ENCODE measurements at regions of chr9 and their contacts with region 1.

Region 1: DNA sequence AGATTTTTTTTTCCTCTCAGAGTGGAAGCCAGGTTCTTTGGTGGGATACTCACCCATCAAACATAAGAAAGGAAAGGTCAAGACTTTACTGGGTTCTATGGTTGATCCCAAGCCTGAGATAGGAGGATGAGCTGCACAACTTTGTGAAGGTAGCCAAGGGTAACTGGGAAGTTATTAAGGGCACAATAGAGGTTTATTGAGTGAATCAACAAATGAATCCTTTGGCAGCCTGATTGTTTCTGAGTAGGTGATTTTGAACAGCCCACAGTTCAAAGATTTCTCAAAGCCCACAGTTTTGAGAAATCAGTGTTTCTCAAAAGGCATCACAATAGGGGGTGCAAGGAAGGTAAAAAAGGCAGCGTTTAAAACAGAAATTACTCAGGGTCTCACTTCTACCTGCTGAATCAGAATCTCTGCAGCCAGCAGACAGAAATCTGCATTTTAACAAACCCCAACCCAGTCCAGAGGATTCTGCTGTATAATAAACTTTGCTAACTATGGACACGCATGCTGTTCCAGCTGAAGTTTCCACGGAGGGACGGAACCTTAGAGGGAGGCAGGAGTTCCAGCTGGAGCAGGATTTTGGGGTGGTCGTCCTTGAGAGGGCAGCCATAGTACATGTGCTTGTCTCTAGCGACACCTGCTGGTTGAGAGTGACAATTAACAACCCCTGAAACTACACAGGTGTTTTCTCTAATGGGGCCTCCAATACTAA is 32.7 kb upstream of the FSD1L start:
- DNase-seq: peak in 1 of 2 donors; percentile 45
- ATAC-seq: peak; percentile 59 to 80 (median 71)
- H3K4me3 ChIP-seq: no peak overlapping the region
- H3K27ac ChIP-seq: no peak overlapping the region
- H3K4me1 ChIP-seq: peaks cover 0 to 11% (median 0%) of the 10 kb centered on the region in 9 donors
- H3K27me3 ChIP-seq: no peaks in the 10 kb centered on the region
- CTCF ChIP-seq: peak; percentile 70 to 92 (median 88)

Region 2: GRCh38 chr9:104808035-104808614 is 607.0 kb before region 1 on chr9:
- intact Hi-C with region 1: loop called in 2 of 10 experiments (anchors 10 kb)
- DNase-seq: peak in 1 of 2 donors; percentile 30
- ATAC-seq: peak in 6 of 8 donors; percentile 54 to 74 (median 66)
- H3K4me3 ChIP-seq: no peak overlapping the region
- H3K27ac ChIP-seq: no peak overlapping the region
- H3K4me1 ChIP-seq: peaks cover 0 to 13% (median 0%) of the 10 kb centered on the region in 9 donors
- H3K27me3 ChIP-seq: no peaks in the 10 kb centered on the region
- CTCF ChIP-seq: peak in 7 of 9 donors; percentile 29 to 58 (median 48)

Region 3: GRCh38 chr9:104863180-104863883 is 551.8 kb before region 1 on chr9:
- intact Hi-C with region 1: loop called (anchors 1 to 10 kb)
- DNase-seq: peak in 1 of 2 donors; percentile 50
- ATAC-seq: peak; percentile 63 to 75 (median 73)
- H3K4me3 ChIP-seq: no peak overlapping the region
- H3K27ac ChIP-seq: peak overlapping the region in 4 of 10 donors; percentile 10 to 66 (median 34)
- H3K4me1 ChIP-seq: peaks cover 6 to 82% (median 35%) of the 10 kb centered on the region in 9 donors
- H3K27me3 ChIP-seq: no peaks in the 10 kb centered on the region
- CTCF ChIP-seq: peak; percentile 38 to 89 (median 77)

Region 4: DNA sequence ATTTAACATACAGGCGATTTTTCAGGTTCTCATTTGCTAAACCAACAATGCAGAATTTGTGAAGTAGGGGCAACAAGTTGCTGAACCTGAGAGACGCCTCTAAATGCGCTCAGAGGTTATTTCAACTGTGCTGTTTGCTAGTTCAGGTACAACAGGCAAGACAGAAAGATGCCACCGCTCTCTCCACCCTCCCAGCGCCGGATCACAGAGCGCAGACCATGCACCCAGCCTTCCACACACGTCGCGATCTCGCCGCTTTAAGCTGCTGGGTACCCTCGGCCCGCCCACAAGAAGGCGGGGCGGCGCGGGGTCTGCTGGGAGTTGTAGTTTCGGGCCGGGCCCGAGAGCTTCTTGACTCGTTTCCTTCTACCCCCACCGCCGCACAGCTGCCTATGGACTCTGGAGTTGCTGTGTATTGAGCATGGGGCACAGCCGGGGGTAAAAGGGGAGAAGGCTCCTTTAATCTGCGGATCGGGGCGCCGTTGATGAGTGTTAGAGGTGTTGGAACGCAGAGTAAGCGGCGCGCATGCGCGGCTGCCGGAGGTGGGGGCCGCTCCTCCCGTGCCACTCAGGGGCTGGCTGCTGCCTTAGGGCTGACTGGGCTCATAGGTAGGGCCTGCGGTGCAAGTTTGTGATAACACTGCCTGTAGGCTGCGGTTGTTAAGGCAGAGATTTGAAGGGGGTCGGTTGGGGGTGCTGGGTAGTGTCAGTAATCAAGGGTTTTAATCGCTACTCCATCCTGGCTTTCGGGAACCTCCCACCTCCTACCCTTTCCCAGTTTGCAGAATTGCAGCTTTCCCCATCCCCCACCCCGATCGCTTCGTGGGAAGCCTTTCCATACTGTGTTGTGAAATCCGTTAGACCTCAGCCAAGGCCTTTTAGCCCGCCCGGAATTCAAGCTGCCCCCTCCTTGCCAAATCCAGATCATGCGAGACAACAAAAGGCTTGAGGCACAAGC is 446.8 kb before region 1 on chr9:
- intact Hi-C with region 1: loop called in 1 of 10 experiments (anchors 10 kb)
- DNase-seq: peak; percentile 89 to 90
- ATAC-seq: peak; percentile 95 to 98 (median 97)
- H3K4me3 ChIP-seq: peak overlapping the region; percentile 65 to 93 (median 75)
- H3K27ac ChIP-seq: peak overlapping the region; percentile 84 to 98 (median 92)
- H3K4me1 ChIP-seq: peaks cover 0 to 25% (median 9%) of the 10 kb centered on the region in 9 donors
- H3K27me3 ChIP-seq: no peaks in the 10 kb centered on the region
- CTCF ChIP-seq: no peak

Region 5: DNA sequence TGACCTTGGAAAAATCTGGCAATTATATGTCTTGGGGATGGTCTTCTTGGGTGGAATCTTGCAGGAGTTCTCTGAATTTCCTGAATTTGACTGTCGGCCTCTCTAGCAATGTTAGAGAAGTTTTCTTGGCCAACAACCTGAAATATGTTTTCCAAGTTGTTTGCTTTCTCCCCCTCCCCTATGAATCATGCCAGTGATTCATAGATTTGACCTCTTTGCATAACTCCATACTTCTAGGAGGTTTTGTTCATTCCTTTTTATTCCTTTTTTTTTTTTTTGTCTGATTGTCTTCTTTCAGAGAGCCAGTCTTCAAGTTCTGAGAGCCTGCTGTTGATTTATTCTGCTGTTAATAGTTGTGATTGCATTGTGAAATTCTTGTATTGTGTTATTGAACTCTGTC is 227.3 kb before region 1 on chr9:
- intact Hi-C with region 1: loop called in 1 of 10 experiments (anchors 10 kb)
- DNase-seq: no peak
- ATAC-seq: peak in 1 of 8 donors; percentile 55
- H3K4me3 ChIP-seq: no peak overlapping the region
- H3K27ac ChIP-seq: no peak overlapping the region
- H3K4me1 ChIP-seq: peaks cover 0 to 19% (median 0%) of the 10 kb centered on the region in 9 donors
- H3K27me3 ChIP-seq: peaks cover 0 to 6% (median 0%) of the 10 kb centered on the region in 7 donors
- CTCF ChIP-seq: no peak